ENCODE measurements at regions of chr2 and their contacts with region 1.

Region 1: DNA sequence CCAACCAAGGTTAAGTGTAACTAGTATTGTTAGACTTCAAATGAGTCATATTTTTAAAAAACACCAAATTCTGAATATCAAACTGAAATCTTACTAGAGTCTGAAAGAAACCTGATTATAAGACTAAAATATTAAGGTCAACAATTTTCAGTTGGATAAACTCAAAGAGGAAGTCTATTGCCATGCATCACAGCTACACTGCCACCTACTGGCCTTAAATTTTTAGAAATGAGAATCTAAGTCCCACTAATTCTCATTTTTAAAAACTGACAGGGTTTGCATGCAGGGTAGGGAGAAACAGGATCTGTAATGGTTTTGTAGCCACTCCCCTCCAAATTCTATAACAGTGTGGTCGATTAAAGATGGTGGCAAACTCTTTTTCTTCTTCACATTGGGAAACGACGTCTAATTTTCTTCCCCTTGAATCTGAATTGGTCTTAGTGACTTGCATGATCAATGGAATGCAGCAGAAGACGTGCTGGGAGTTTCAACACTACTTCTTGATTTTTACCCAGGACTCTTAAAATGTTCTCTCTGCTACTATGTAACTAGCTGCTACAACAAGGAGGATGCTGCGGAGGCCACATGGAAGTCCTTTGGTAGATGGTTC is 176.1 kb upstream of the SESTD1 start:
- DNase-seq: peak; percentile 16 to 49 (median 36)
- H3K4me3 ChIP-seq: no peak overlapping the region
- H3K4me3 Mint-ChIP-seq: no peak overlapping the region
- H3K27ac ChIP-seq: no peak overlapping the region
- H3K27ac Mint-ChIP-seq: no peak overlapping the region
- H3K4me1 ChIP-seq: peaks cover 10 to 12% of the 10 kb centered on the region in 2 donors
- H3K4me1 Mint-ChIP-seq: peaks cover 19% of the 10 kb centered on the region
- H3K27me3 ChIP-seq: no peaks in the 10 kb centered on the region
- H3K27me3 Mint-ChIP-seq: peaks cover 0 to 4% (median 1%) of the 10 kb centered on the region in 3 donors
- CTCF ChIP-seq: peak; percentile 85

Region 2: DNA sequence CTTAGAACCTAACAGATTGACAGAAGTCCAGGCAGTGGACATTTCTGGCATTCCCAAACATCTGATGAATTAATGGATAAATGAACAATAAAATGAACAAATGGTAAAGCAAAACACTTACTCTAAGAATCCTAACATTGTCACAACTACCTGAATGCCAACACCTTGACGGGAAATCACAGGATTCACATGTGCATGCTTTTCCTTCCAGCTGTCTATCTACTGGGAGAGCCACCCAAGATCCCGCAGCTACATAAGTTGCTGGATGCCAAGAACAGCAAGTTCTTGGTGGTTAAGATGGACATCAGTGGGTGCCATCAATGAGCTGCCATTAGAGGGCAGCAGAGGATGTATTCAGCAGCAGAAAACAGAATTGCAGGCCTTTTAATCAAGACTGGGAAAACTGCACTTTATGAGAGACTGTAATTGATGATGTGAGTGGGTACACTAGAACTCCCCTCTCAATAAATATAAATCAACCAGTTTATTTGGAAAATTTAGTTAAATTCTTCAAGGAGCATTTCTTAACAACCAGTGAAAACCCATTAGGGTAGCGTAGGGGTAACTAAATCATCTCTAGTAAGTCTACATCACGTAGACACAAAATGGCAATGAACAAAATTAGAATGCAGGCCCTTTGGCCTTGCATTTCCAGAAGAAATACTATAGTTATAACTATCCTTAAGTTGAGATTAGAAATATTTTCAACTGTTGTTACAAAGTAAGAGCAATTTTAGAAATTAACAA is 221.7 kb before region 1 on chr2:
- intact Hi-C with region 1: loop called (anchors 5 kb)
- DNase-seq: peak; percentile 53 to 71 (median 66)
- H3K4me3 ChIP-seq: no peak overlapping the region
- H3K4me3 Mint-ChIP-seq: no peak overlapping the region
- H3K27ac ChIP-seq: no peak overlapping the region
- H3K27ac Mint-ChIP-seq: no peak overlapping the region
- H3K4me1 ChIP-seq: no peaks in the 10 kb centered on the region
- H3K4me1 Mint-ChIP-seq: peaks cover 6% of the 10 kb centered on the region
- H3K27me3 ChIP-seq: no peaks in the 10 kb centered on the region
- H3K27me3 Mint-ChIP-seq: no peaks in the 10 kb centered on the region
- CTCF ChIP-seq: peak; percentile 94

Region 3: DNA sequence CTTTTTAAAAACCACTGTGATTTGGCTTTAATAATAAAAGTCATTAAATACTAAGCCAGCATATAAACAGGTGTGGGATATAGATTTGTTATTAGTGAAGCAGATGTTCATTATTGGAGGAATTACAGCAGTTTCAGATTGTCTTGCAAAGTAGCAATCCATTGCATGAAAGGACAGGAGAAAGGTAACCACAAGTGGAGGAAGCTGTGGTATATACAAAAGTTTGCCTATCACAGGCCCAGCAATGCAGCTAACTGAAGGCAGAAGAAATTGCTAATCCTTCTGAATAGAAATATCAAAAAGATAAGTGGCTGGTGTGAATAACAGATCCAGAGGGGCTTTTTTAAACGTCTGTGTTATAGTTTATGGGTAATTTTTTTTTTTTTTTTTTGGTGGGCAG is 221.2 kb after region 1 on chr2:
- intact Hi-C with region 1: no loop called
- DNase-seq: no peak
- H3K4me3 ChIP-seq: no peak overlapping the region
- H3K4me3 Mint-ChIP-seq: no peak overlapping the region
- H3K27ac ChIP-seq: no peak overlapping the region
- H3K27ac Mint-ChIP-seq: peak overlapping the region in 1 of 7 donors; percentile 19
- H3K4me1 ChIP-seq: no peaks in the 10 kb centered on the region
- H3K4me1 Mint-ChIP-seq: peaks cover 8% of the 10 kb centered on the region
- H3K27me3 ChIP-seq: no peaks in the 10 kb centered on the region
- H3K27me3 Mint-ChIP-seq: peaks cover 0 to 1% (median 0%) of the 10 kb centered on the region in 3 donors
- CTCF ChIP-seq: no peak